Aorta (tissue), 5 donors: ENCODE measurements at regions of chr3 and their contacts with region 1.

Region 1: GRCh38 chr3:153439777-153440176 is 277.8 kb downstream of the RAP2B start:
- DNase-seq: no peak
- ATAC-seq: no peak
- H3K4me3 ChIP-seq: no peak overlapping the region
- H3K27ac ChIP-seq: no peak overlapping the region
- H3K4me1 ChIP-seq: peaks cover 4 to 6% of the 10 kb centered on the region in 2 donors
- H3K27me3 ChIP-seq: no peaks in the 10 kb centered on the region

Region 2: GRCh38 chr3:153319705-153320554 is 119.8 kb before region 1 on chr3:
- intact Hi-C with region 1: loop called in 1 of 2 experiments (anchors 5 kb)
- DNase-seq: no peak
- ATAC-seq: no peak
- H3K4me3 ChIP-seq: no peak overlapping the region
- H3K27ac ChIP-seq: no peak overlapping the region
- H3K4me1 ChIP-seq: peaks cover 0 to 2% of the 10 kb centered on the region in 2 donors
- H3K27me3 ChIP-seq: no peaks in the 10 kb centered on the region

Region 3: DNA sequence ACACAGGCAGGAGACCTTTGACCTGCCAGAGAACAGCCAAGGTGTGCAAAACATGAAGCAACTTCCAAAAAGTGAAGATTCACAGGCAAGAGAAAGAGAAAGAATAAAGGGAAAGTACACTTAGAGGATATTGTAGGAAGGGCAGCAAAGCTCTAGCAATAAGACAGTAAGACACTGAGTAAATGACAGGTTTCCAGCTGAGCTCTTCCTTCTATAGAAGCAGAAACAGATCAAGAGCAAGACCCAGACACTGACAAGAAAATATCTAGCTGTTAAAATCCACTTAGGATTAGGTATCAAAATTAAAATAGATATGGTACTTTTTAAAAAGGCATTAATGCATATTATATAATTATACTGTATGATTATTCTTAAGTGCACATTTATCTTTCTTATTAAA is 55.6 kb after region 1 on chr3:
- intact Hi-C with region 1: no loop called
- DNase-seq: no peak
- ATAC-seq: no peak
- H3K4me3 ChIP-seq: no peak overlapping the region
- H3K27ac ChIP-seq: no peak overlapping the region
- H3K4me1 ChIP-seq: no peaks in the 10 kb centered on the region
- H3K27me3 ChIP-seq: no peaks in the 10 kb centered on the region